KBM-7 (cell line): ENCODE measurements at regions of chr5 and their contacts with region 1.

Region 1: DNA sequence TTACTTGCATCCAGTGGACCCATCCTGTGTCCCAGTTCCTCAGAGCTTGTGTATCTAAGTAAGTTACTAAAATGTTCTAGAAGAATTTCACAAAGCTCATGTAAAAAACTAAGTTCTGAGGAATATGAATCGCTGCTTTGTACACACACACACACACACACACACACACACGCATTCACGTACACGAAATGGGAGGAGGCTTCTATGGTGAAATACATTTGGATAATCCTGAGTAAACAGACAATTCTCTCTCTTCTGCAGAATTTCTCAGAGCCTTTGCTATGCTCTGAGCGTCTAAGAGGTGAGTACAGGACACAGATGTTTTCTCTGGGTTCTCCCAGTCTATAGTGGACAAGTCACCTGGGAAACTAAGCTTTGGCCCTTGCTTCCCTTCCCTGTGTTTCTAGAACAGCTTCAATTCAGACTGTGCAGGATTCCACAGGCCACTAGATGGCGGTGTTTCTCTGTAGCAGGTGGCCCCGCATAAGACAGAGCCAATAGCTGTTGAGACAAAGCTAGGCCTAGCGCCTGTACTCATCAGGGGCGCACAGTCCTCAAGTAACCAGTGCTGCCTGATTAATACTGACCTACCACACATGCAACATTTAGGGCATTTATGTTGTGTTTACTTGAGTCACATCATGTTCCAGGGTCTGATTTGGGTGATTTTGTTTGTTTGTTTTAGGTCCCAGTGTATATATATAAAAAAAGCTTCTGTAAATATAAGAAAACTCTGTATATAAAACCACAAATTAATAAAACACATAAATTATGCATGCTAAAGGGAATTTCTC is 114.8 kb downstream of the LIFR start:
- DNase-seq: peak; percentile 86

Region 2: GRCh38 chr5:38809388-38810359 is 368.0 kb after region 1 on chr5:
- in situ Hi-C with region 1: loop called (anchors 25 kb)
- DNase-seq: peak; percentile 71